ENCODE measurements at regions of chr1 and their contacts with region 1.

Region 1: GRCh38 chr1:182249201-182249676 is 142.4 kb downstream of the GLUL start:
- DNase-seq: peak; percentile 53
- H3K4me3 Mint-ChIP-seq: no peak overlapping the region
- H3K27ac Mint-ChIP-seq: peak overlapping the region; percentile 86
- H3K4me1 Mint-ChIP-seq: peaks cover 29% of the 10 kb centered on the region
- H3K27me3 Mint-ChIP-seq: no peaks in the 10 kb centered on the region

Region 2: DNA sequence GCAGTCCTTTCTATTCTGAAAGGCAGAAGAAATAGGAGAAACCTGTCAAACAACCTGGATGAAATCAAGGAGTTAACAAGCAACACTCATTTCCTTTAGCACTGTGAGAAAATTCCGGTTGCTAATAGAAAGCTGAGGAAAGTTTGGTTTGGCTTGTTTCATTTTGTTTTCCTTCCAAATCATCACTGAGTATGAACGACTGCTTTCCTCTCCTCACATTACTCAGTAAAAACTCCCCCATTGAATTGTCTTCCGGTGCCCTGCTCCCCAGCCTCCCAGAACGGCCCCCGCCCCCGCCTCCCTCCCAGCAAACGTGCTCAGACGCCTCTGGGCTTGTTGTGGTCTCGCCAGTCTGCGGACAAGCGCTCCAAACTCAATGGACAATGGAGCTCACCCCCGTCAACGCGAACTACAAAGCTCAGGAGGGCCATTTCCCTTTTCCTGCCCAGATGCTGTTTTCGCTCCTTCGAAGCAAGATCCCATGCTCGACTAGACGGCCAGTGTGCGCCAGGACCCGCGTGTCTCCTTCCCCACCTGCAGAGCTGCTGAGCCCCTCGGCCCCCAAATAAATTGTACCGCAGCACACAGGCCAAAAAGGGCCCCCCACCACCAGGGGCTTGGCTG is 1227.3 kb before region 1 on chr1:
- intact Hi-C with region 1: loop called (anchors 5 kb)
- DNase-seq: peak; percentile 37
- H3K4me3 Mint-ChIP-seq: peak overlapping the region; percentile 96
- H3K27ac Mint-ChIP-seq: peak overlapping the region; percentile 97
- H3K4me1 Mint-ChIP-seq: peaks cover 46% of the 10 kb centered on the region
- H3K27me3 Mint-ChIP-seq: peaks cover 15% of the 10 kb centered on the region

Region 3: GRCh38 chr1:181479137-181479745 is 770.0 kb before region 1 on chr1:
- intact Hi-C with region 1: no loop called
- DNase-seq: peak; percentile 7
- H3K4me3 Mint-ChIP-seq: no peak overlapping the region
- H3K27ac Mint-ChIP-seq: no peak overlapping the region
- H3K4me1 Mint-ChIP-seq: peaks cover 11% of the 10 kb centered on the region
- H3K27me3 Mint-ChIP-seq: peaks cover 34% of the 10 kb centered on the region

Region 4: DNA sequence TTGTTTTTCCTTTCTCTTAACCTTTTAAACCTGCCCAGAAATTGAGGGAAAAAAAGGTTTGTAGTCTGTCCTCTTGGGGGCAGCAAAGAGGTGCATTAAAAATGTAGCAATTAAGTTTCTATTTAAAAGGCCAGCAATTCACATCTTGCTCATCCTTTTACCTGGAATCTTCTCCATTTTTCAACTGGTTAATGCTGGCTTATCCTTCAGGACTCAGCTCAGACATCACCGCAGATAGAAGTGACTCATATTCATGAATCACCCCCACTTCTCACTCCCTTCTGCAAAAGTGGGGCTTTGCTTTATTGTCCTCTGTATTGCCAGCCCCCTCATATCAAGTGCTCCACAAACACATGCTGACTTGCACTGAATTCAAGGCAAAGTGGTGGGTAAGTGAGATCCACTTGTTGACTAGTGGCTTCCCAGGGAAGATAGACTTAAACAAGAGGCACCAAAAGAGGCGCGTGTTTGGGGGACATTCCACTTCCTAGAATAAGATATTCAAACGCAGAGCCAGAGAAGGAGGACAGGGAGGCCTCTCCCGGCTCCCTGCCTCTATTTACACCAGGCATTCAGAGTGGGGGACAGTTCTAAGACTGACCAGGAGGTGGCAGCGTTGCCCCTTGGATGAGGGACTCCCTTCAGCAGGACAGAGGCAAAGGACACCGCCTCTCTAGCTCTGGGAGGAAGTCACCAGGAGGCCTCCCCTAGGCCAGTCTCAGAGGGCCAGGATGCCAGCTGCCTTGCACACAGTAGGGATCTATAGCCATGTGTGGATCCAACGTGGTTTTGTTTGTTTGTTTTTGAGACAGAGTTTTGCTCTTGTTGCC is 164.5 kb before region 1 on chr1:
- intact Hi-C with region 1: loop called (anchors 10 kb)
- DNase-seq: peak; percentile 76
- H3K4me3 Mint-ChIP-seq: peak overlapping the region; percentile 26
- H3K27ac Mint-ChIP-seq: peak overlapping the region; percentile 61
- H3K4me1 Mint-ChIP-seq: peaks cover 55% of the 10 kb centered on the region
- H3K27me3 Mint-ChIP-seq: no peaks in the 10 kb centered on the region

Region 5: GRCh38 chr1:182235952-182236650 is 13.1 kb before region 1 on chr1:
- intact Hi-C with region 1: no loop called
- DNase-seq: no peak
- H3K4me3 Mint-ChIP-seq: no peak overlapping the region
- H3K27ac Mint-ChIP-seq: no peak overlapping the region
- H3K4me1 Mint-ChIP-seq: no peaks in the 10 kb centered on the region
- H3K27me3 Mint-ChIP-seq: peaks cover 4% of the 10 kb centered on the region

Region 6: GRCh38 chr1:182301467-182302198 is 52.4 kb after region 1 on chr1:
- intact Hi-C with region 1: loop called (anchors 1 kb)
- DNase-seq: peak; percentile 9
- H3K4me3 Mint-ChIP-seq: peak overlapping the region; percentile 37
- H3K27ac Mint-ChIP-seq: peak overlapping the region; percentile 88
- H3K4me1 Mint-ChIP-seq: peaks cover 51% of the 10 kb centered on the region
- H3K27me3 Mint-ChIP-seq: no peaks in the 10 kb centered on the region

Region 7: GRCh38 chr1:182614796-182615454 is 365.7 kb after region 1 on chr1:
- intact Hi-C with region 1: loop called (anchors 5 kb)
- DNase-seq: peak; percentile 34
- H3K4me3 Mint-ChIP-seq: peak overlapping the region; percentile 81
- H3K27ac Mint-ChIP-seq: peak overlapping the region; percentile 88
- H3K4me1 Mint-ChIP-seq: peaks cover 89% of the 10 kb centered on the region
- H3K27me3 Mint-ChIP-seq: peaks cover 16% of the 10 kb centered on the region

Region 8: GRCh38 chr1:183023601-183024316 is 774.5 kb after region 1 on chr1:
- intact Hi-C with region 1: loop called (anchors 10 kb)
- DNase-seq: peak; percentile 4
- H3K4me3 Mint-ChIP-seq: peak overlapping the region; percentile 83
- H3K27ac Mint-ChIP-seq: no peak overlapping the region
- H3K4me1 Mint-ChIP-seq: peaks cover 20% of the 10 kb centered on the region
- H3K27me3 Mint-ChIP-seq: peaks cover 78% of the 10 kb centered on the region